ENCODE measurements at regions of chrX and their contacts with region 1.

Region 1: DNA sequence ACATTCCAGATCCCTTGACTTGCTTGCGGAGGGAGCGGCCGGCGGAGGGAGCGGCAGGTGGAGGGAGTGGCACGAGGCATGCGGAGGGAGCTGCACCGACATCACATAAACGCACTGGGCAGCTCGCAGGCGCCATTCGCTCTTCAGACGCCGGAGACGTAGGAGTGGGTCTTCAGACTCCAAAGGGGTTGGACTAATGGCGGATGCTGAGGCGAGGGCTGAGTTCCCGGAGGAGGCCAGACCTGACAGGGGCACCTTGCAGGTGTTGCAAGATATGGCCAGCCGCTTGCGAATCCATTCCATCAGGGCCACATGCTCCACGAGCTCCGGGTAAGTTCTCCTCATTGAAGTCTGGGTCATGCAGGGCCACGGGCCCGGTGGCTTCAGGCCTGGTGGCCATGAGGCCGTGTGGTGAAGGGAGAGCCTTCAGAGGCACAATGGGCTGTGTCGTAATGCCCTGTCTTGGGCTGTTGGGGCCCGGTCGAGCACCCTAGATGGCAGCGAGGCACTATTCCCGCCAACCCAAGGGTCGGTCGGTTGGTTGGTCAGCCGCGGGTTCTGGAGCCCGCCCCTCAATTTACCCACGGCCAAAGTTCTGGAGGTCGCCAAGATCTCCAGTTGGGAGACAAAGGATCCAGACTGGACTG is at the start of gene TKTL1:
- DNase-seq: no peak

Region 2: DNA sequence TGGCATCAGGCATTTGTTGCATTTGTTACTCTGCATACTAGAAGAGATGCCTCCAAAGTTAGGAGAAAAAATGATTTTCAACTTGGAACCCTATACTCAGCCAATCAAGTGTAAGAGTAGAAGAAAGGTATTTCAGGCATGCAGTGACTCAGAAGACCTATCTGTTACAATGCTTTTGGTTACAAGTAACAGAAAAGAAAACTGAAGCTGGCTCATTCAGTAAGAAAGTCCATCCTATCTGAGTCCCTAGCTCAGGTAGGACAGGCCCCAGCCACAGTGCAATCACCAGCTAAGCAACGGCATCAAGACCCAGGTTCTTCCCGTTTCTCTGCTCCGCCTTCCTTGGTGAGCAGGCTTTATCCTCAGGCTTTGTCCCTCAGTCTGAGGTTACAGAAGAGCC is 221.6 kb before region 1 on chrX:
- CTCF ChIA-PET with region 1: no interaction called
- POLR2A ChIA-PET with region 1: no interaction called
- DNase-seq: no peak

Region 3: DNA sequence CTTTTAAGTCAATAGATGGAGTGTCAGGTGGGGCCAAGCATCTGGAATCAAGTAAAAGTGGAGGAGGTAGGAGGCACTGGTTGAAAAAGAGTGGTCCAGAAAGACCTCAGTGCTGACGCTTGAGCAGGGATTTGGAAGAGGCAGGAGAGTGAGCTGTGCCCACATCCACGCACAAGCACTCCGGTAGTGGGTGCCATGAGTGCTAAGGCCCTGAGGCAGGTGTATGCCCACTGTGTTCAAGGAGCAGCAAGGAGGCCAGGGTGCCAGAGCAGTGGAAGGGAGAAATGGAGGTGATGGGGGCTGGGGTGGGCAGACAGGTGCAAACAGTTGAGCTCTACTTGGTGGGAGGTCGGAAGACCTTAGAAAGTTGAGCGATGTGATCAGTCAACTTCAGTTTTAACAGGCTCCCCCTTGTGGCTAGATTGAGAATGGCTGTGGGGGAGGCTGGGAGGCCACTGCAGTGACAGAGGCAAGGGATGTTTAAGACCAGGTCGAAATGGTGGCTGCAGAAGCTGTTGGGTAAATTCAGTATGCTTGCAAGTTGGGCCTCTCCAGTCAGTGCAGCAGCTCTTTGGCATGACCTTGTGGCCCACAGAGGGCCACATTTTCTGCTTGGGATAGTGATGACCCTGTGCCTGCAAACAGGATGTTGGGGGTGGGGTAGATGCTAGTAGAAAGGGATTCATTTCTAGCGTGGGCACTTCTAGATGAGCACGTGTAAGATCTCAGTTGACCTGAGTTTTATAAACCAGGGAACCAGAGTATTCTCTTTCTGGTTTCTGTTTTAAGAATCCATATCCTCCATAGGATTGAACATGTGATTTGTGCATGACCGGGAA is 12.5 kb after region 1 on chrX:
- CTCF ChIA-PET with region 1: interaction called, 12 read pairs
- POLR2A ChIA-PET with region 1: no interaction called
- DNase-seq: peak; percentile 78

Region 4: GRCh38 chrX:154748712-154749343 is 453.0 kb after region 1 on chrX:
- CTCF ChIA-PET with region 1: no interaction called
- POLR2A ChIA-PET with region 1: no interaction called
- DNase-seq: peak; percentile 73